ENCODE measurements at regions of chr14 and their contacts with region 1.

Region 1: GRCh38 chr14:72904840-72905561 is 11.1 kb upstream of the DPF3 start:
- DNase-seq: peak; percentile 30 to 71 (median 42)
- ATAC-seq: peak; percentile 48; the same call in 2 of the 3 replicates
- H3K4me3 ChIP-seq: no peak overlapping the region
- H3K27ac ChIP-seq: no peak overlapping the region
- H3K4me1 ChIP-seq: peaks cover 5 to 23% of the 10 kb centered on the region in 2 experiments
- H3K27me3 ChIP-seq: no peaks in the 10 kb centered on the region
- CTCF ChIP-seq: peak; percentile 72 to 85 (median 76)
- EP300 ChIP-seq: no peak
- POLR2A ChIP-seq: no peak
- RAD21 ChIP-seq: peak; percentile 87 to 92

Region 2: DNA sequence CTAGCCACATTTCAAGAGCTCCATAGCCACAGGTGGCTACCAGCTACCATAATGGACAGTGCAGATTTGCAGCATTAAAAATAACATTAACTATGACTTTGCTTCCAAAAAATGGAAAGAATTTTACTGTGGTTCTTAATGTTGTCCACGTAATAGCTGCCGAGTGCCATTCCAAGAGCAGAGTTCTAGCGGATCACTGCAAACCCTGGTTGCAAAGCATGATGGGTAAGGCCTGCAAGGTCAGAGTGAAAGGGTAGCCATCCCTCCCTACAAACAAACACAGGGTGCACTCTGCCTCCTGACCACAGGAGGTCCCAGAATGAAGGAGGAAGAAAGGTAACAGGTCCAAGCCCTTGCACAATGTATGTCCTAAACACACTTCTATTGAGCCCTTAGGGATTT is 168.7 kb before region 1 on chr14:
- CTCF ChIA-PET with region 1: no interaction called
- POLR2A ChIA-PET with region 1: no interaction called
- in situ Hi-C with region 1: no loop called
- intact Hi-C with region 1: loop called (anchors 10 kb)
- DNase-seq: peak; percentile 37 to 60 (median 47)
- ATAC-seq: peak; percentile 91
- H3K4me3 ChIP-seq: no peak overlapping the region
- H3K27ac ChIP-seq: no peak overlapping the region
- H3K4me1 ChIP-seq: peaks cover 2 to 5% of the 10 kb centered on the region in 2 experiments; a peak in 3 of 5 replicates
- H3K27me3 ChIP-seq: no peaks in the 10 kb centered on the region; a peak in 1 of 5 replicates
- CTCF ChIP-seq: peak in 1 of 3 experiments; percentile 25; a peak in 2 of 6 replicates
- EP300 ChIP-seq: no peak
- POLR2A ChIP-seq: no peak
- RAD21 ChIP-seq: peak in 1 of 2 experiments; percentile 30; a peak in 1 of 4 replicates

Region 3: GRCh38 chr14:72822946-72823611 is 81.9 kb before region 1 on chr14:
- CTCF ChIA-PET with region 1: interaction called, 3 read pairs
- POLR2A ChIA-PET with region 1: no interaction called
- in situ Hi-C with region 1: no loop called
- intact Hi-C with region 1: loop called (anchors 2 kb)
- DNase-seq: peak; percentile 47 to 91 (median 68)
- ATAC-seq: peak; percentile 77
- H3K4me3 ChIP-seq: no peak overlapping the region
- H3K27ac ChIP-seq: peak overlapping the region; percentile 60; the same call in 2 of the 3 replicates
- H3K4me1 ChIP-seq: peaks cover 14 to 31% of the 10 kb centered on the region in 2 experiments; a peak in 3 of 5 replicates
- H3K27me3 ChIP-seq: no peaks in the 10 kb centered on the region; a peak in 1 of 5 replicates
- CTCF ChIP-seq: peak in 1 of 3 experiments; percentile 22; a peak in 2 of 6 replicates
- EP300 ChIP-seq: peak; percentile 82
- POLR2A ChIP-seq: no peak
- RAD21 ChIP-seq: peak in 1 of 2 experiments; percentile 48; a peak in 2 of 4 replicates

Region 4: GRCh38 chr14:72926292-72927028 is 21.5 kb after region 1 on chr14 and contains the start of gene DCAF4:
- CTCF ChIA-PET with region 1: no interaction called
- POLR2A ChIA-PET with region 1: interaction called, 11 read pairs
- in situ Hi-C with region 1: no loop called
- intact Hi-C with region 1: no loop called
- DNase-seq: peak; percentile 69 to 97 (median 82)
- ATAC-seq: peak; percentile 94
- H3K4me3 ChIP-seq: peak within 1 kb of the TSS; percentile 90
- H3K27ac ChIP-seq: peak within 1 kb of the TSS; percentile 98
- H3K4me1 ChIP-seq: peaks cover 21 to 49% of the 10 kb centered on the region in 2 experiments
- H3K27me3 ChIP-seq: no peaks in the 10 kb centered on the region
- CTCF ChIP-seq: no peak
- EP300 ChIP-seq: no peak
- POLR2A ChIP-seq: peak; percentile 55
- RAD21 ChIP-seq: no peak
- polyA plus RNA-seq, gene DCAF4: 2.7 to 3.8 TPM

Region 5: GRCh38 chr14:73991092-73991491 is 1086.1 kb after region 1 on chr14:
- CTCF ChIA-PET with region 1: no interaction called
- POLR2A ChIA-PET with region 1: no interaction called
- in situ Hi-C with region 1: no loop called
- intact Hi-C with region 1: no loop called
- DNase-seq: no peak
- ATAC-seq: no peak
- H3K4me3 ChIP-seq: no peak overlapping the region
- H3K27ac ChIP-seq: no peak overlapping the region
- H3K4me1 ChIP-seq: no peaks in the 10 kb centered on the region
- H3K27me3 ChIP-seq: no peaks in the 10 kb centered on the region
- CTCF ChIP-seq: no peak
- EP300 ChIP-seq: no peak
- POLR2A ChIP-seq: no peak
- RAD21 ChIP-seq: no peak